ENCODE measurements at regions of chr1 and their contacts with region 1.

Region 1: GRCh38 chr1:3069491-3070303 is 694 bp downstream of the PRDM16 start:
- DNase-seq: peak; percentile 77

Region 2: GRCh38 chr1:3170561-3171453 is 101.1 kb after region 1 on chr1:
- intact Hi-C with region 1: loop called (anchors 5 kb)
- DNase-seq: peak; percentile 83

Region 3: GRCh38 chr1:3283849-3284248 is 214.2 kb after region 1 on chr1:
- intact Hi-C with region 1: loop called (anchors 2 kb)
- DNase-seq: no peak

Region 4: GRCh38 chr1:3349161-3349967 is 279.7 kb after region 1 on chr1:
- intact Hi-C with region 1: loop called (anchors 1 kb)
- DNase-seq: peak; percentile 91

Region 5: DNA sequence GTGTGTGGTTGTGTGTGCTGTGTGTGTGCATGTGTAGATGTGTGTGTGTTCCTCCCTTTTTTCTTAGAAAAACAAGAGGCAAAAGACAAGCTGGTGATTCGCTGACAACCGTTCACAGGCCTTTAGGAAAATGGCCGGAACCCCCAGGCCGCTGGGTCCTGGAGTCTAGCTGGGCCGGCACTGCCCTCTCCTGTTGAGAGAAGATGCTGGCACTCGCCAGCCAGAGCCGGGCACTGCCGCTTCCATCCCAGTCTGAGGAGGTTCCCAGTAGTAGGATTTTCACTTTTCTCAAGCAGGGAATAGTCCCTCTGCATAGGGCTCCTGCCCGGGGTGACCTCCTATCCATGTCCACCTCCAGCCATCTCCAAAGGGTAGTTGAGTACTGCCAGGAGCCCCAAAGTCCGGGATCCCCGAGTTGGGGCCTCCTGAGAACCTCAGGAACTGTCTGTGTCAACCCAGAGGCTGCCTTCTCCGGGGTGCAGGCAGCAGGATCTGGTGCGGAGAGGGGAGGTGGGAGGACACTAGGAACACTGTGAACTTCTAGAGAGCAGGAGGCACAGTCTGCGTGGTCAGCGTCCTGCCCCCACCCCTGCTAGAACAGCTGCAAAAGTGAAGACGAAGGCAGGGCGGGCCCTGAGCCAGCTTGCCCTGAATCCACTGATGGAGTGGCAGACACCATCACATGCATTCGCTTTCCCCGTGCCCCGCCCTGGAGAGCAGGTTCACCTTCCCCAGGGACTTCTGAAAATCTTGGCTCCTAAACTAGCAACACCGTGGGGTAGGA is 340.6 kb after region 1 on chr1:
- intact Hi-C with region 1: loop called (anchors 1 kb)
- DNase-seq: no peak